ENCODE measurements at regions of chr9 and their contacts with region 1.

Region 1: GRCh38 chr9:35903049-35903448 is 3.0 kb upstream of the HRCT1 start:
- DNase-seq: no peak

Region 2: GRCh38 chr9:35790385-35791296 is 112.4 kb before region 1 on chr9:
- intact Hi-C with region 1: loop called in 1 of 2 experiments (anchors 10 kb)
- DNase-seq: peak; percentile 85

Region 3: GRCh38 chr9:35844716-35845270 is 58.3 kb before region 1 on chr9:
- intact Hi-C with region 1: loop called in 1 of 2 experiments (anchors 1 kb)
- DNase-seq: peak; percentile 25

Region 4: DNA sequence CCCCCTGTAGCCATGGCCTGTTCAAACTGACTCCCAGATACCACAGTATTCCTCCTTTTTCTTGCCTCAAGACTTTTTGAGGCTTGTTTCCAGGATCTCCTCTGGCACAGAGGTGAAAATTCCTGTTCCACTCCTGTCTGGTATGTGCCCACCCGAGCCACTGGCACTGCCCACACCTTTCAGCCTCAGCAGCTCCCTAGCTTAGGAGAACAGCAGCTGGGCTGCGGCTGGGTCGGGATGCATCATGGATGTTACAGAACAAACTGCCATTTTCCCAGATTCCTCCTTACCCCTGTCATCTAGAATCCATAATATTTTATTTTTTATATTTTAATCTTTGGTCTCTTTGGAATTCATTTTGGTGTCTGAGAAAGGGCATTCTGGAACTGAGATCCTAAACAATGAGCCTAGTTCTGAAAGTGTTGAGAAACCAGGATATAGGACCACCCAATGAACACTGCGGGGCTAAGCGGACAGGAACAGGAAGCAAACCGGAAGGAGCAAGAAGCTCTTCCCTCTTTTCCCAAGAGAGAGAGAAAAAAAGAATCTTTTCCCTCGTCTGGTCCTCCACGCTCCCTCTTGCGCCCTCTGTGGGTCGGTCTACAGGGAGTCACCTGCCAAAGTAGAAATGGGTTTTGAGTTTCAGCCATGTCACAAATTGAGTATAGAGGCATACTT is 42.4 kb after region 1 on chr9:
- intact Hi-C with region 1: loop called (anchors 2 to 5 kb)
- DNase-seq: peak; percentile 95

Region 5: DNA sequence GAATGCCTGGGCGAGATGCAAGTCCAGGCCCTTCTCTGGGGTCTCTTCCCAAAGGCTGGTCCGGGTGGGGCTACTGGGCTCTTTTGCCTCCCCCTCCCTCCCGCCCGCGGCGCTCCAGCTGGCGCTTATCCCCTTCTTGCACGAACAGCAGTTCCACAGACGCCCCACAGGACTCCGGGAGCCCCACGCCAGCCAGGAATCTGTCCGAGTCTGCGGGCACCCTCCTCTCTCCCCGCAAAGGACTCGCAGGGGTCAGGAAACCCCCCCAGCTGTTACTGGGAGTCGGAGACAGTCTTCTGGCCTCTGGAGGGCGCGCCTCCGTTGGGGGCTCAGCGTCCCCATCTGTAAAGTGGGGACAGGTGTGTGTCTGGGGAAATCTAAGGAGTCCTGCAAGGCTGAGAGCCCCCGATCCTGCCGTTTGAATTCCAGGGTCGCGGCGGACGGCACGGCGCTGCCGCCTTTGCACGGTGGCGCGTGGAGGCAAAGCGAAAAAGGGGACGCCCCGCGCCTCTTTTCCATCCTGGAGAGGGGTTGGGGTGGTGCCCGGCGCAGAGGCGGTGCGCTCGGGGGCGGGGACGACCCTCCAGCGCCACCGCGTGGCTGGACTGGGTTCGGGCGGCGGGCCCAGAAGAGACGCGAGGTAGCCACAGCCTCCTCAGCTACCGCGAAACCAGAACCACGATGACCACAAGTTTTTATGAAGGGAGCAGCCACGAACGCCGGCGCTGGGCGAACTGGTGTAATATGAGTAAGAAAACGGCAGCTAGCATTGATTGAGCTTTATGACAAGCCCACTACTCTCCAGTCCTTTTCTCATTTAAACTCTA is 263.3 kb after region 1 on chr9:
- intact Hi-C with region 1: loop called in 1 of 2 experiments (anchors 10 kb)
- DNase-seq: peak; percentile 96

Measured in posterior vena cava (tissue), 2 donors.